ENCODE measurements at regions of chr12 and their contacts with region 1.

Region 1: DNA sequence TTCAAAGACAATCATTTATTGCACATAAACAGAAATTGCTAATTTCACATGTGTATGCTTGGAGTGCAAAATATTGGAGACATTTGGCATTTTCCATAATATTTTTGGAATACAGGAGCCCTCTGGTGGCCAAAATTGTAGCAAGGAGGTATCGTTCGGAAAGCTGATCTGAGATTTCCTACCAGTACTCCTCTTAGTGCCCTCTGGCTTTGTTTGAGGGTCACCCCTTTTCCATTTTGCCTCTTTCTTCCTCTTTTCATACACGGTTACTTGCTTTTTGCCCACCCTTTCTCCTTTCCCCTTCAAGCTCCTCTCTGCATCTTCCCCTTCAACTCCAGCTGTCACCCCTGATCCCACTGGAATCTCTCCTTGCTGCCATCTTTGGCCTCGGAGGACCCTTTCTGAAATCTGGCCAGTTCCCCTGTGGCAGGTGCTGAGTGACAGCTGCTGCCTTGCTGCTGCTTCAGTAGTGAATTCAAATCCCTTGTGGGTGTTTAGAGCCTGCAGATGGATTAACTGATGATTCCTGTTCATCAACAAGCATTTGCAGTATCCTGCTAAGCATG is 164.6 kb upstream of the PARP11 start:
- DNase-seq: peak; percentile 44
- ATAC-seq: peak; percentile 59
- H3K4me3 ChIP-seq: no peak overlapping the region
- H3K27ac ChIP-seq: no peak overlapping the region
- H3K4me1 ChIP-seq: peaks cover 2% of the 10 kb centered on the region; the same call in 1 of the 2 replicates
- H3K27me3 ChIP-seq: peaks cover 27% of the 10 kb centered on the region
- CTCF ChIP-seq: peak; percentile 79
- POLR2A ChIP-seq: no peak
- RAD21 ChIP-seq: peak; percentile 63

Region 2: GRCh38 chr12:3872800-3873636 is 164.8 kb before region 1 on chr12 and contains the start of gene PARP11:
- CTCF ChIA-PET with region 1: no interaction called
- POLR2A ChIA-PET with region 1: no interaction called
- dilution Hi-C with region 1: no loop called
- in situ Hi-C with region 1: no loop called
- intact Hi-C with region 1: no loop called
- DNase-seq: peak; percentile 95
- ATAC-seq: peak; percentile 100
- H3K4me3 ChIP-seq: peak within 1 kb of the TSS; percentile 82
- H3K27ac ChIP-seq: peak within 1 kb of the TSS; percentile 97
- H3K4me1 ChIP-seq: no peaks in the 10 kb centered on the region
- H3K27me3 ChIP-seq: no peaks in the 10 kb centered on the region
- CTCF ChIP-seq: no peak
- POLR2A ChIP-seq: peak; percentile 74
- RAD21 ChIP-seq: no peak
- total RNA-seq, gene PARP11: 1.7 and 1.8 TPM in 2 replicates

Region 3: GRCh38 chr12:3998968-3999826 is 38.6 kb before region 1 on chr12:
- CTCF ChIA-PET with region 1: interaction called, 45 read pairs
- POLR2A ChIA-PET with region 1: no interaction called
- dilution Hi-C with region 1: no loop called
- in situ Hi-C with region 1: no loop called
- intact Hi-C with region 1: loop called (anchors 1 kb)
- DNase-seq: no peak
- ATAC-seq: no peak
- H3K4me3 ChIP-seq: no peak overlapping the region
- H3K27ac ChIP-seq: no peak overlapping the region
- H3K4me1 ChIP-seq: no peaks in the 10 kb centered on the region
- H3K27me3 ChIP-seq: peaks cover 9% of the 10 kb centered on the region
- CTCF ChIP-seq: no peak
- POLR2A ChIP-seq: no peak
- RAD21 ChIP-seq: no peak

Region 4: DNA sequence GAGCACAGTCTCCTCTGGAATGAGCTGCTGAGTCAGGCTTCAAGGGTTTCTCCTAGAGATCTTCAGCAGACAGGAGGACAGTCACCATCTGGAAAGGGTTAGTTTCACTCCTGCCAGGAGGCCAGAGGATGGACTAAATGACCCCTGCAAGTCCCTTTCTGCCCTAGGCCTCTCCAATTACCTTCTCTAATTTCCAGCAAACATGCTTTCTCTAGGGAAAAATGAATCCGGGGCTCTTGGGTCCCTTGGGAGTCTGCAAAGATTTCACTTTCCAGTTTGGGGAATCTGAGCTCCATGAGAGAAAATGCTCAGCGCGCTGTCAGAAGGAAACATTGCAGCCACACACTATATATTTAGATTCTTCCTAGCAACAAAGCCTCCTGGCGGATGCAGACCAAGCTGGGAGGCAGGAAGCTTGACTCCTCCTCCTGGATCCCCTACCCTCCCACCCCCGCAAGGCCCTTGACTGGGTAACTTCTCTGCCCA is 51.3 kb after region 1 on chr12:
- CTCF ChIA-PET with region 1: no interaction called
- POLR2A ChIA-PET with region 1: no interaction called
- dilution Hi-C with region 1: no loop called
- in situ Hi-C with region 1: no loop called
- intact Hi-C with region 1: no loop called
- DNase-seq: no peak
- ATAC-seq: peak; percentile 65
- H3K4me3 ChIP-seq: no peak overlapping the region
- H3K27ac ChIP-seq: no peak overlapping the region
- H3K4me1 ChIP-seq: no peaks in the 10 kb centered on the region
- H3K27me3 ChIP-seq: peaks cover 6% of the 10 kb centered on the region; the same call in 1 of the 2 replicates
- CTCF ChIP-seq: no peak
- POLR2A ChIP-seq: no peak
- RAD21 ChIP-seq: no peak